Activated B cell treated with CpG ODN at 0.5 μM for 24 hours (primary cell): ENCODE measurements at regions of chrX and their contacts with region 1.

Region 1: DNA sequence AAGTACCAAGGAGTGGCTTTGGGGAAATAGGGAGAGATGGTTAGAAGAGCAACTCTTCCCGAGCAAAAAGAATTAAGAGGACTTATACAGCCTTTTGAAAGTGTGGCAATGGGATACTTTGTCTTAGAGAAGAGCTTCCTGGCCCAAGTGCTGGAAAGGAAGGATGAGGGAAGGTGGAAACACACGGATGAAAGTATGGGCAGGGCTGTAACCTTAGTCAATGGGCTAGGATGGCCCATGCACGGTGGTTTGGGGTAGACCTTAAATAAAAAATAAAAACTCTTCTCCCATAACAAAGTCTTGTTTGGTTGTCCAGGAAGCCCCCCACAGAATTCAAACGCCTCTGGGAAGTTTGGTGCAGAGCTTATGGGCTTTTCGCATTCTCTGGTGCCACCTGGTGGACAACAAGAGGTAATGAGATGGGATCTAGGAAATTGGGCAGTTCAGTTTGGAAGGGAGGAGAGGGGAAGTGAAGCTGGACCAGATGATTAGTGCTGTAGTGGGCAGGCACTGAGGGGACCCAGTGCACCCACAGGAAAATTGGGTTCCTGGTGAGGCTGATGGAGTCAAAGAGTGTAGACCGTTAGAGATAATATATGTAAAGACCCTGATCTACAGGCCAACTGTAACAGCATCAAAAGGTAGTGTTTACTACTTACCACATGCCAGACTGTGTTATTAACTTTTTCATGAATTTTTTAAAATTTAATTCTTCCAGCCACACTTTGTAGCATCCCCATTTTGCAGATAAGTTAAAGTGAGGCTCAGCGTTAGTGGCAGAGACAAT is 13.8 kb upstream of the ENOX2 start:
- DNase-seq: peak; percentile 14
- ATAC-seq: peak; percentile 54
- H3K4me3 Mint-ChIP-seq: no peak overlapping the region
- H3K27ac Mint-ChIP-seq: no peak overlapping the region
- H3K4me1 Mint-ChIP-seq: no peaks in the 10 kb centered on the region
- H3K27me3 Mint-ChIP-seq: no peaks in the 10 kb centered on the region
- CTCF ChIP-seq: no peak

Region 2: DNA sequence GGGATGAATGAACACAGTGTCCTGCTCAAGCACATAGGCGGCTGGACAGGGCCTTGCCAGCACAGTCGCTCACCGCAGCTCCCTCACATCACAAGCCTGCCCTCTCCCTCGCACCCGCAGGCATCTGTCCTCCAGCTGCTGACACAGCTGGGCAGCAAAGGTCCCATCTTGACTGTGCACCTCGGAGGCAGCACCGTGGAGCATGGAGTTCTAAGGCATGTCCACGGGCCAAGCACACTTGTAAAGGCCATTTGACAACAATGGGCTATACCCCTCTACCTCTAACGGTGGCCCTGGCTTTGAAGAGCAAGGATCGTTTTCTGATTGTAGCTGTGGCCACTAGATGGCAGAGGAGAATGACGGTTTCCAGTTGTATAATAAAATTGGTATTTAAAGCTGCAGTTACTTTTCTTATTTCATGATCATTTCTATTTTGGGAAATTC is 1315.8 kb before region 1 on chrX:
- CTCF ChIA-PET with region 1: no interaction called
- POLR2A ChIA-PET with region 1: no interaction called
- intact Hi-C with region 1: loop called (anchors 5 kb)
- DNase-seq: no peak
- ATAC-seq: no peak
- H3K4me3 Mint-ChIP-seq: no peak overlapping the region
- H3K27ac Mint-ChIP-seq: no peak overlapping the region
- H3K4me1 Mint-ChIP-seq: peaks cover 17% of the 10 kb centered on the region
- H3K27me3 Mint-ChIP-seq: no peaks in the 10 kb centered on the region
- CTCF ChIP-seq: no peak

Region 3: GRCh38 chrX:130330706-130331105 is 586.1 kb before region 1 on chrX:
- CTCF ChIA-PET with region 1: interaction called, 16 read pairs
- POLR2A ChIA-PET with region 1: no interaction called
- intact Hi-C with region 1: loop called (anchors 1 kb)
- DNase-seq: peak; percentile 15
- ATAC-seq: peak; percentile 25
- H3K4me3 Mint-ChIP-seq: no peak overlapping the region
- H3K27ac Mint-ChIP-seq: no peak overlapping the region
- H3K4me1 Mint-ChIP-seq: no peaks in the 10 kb centered on the region
- H3K27me3 Mint-ChIP-seq: peaks cover 5% of the 10 kb centered on the region
- CTCF ChIP-seq: no peak

Region 4: DNA sequence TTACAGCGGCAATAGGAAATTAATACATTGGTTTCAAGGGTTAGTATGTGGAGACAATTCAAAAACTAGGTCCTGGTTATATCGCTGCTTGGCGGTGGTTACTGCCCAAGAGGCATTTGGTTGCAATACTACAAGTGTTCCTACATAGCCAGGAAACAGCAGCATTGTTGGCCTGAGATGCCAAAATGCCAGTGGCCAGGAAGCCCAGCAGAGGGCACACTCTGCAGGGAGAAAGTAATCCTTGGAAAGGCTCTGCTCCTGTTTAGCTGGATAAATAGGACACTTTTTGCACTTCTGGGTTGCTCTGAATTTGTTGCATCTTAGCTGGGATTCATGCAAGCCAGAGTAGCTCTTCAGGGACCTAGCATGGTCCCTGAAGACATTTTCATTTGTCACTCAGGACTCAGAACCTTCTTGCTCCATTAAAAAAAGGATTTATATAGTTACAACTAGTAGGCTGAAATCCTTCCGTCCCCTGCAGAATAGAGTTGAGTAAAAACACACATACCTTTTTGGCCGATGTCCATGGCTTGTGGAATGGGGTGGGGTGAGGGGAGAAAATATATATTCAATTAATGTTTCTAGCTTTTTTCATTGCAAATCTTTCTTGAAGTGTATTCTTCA is 523.3 kb before region 1 on chrX:
- CTCF ChIA-PET with region 1: interaction called, 5 read pairs
- POLR2A ChIA-PET with region 1: no interaction called
- intact Hi-C with region 1: loop called (anchors 2 kb)
- DNase-seq: no peak
- ATAC-seq: no peak
- H3K4me3 Mint-ChIP-seq: no peak overlapping the region
- H3K27ac Mint-ChIP-seq: no peak overlapping the region
- H3K4me1 Mint-ChIP-seq: no peaks in the 10 kb centered on the region
- H3K27me3 Mint-ChIP-seq: peaks cover 14% of the 10 kb centered on the region
- CTCF ChIP-seq: no peak

Region 5: GRCh38 chrX:130539721-130540321 is 377.0 kb before region 1 on chrX:
- CTCF ChIA-PET with region 1: interaction called, 40 read pairs
- POLR2A ChIA-PET with region 1: no interaction called
- intact Hi-C with region 1: loop called (anchors 1 kb)
- DNase-seq: no peak
- ATAC-seq: peak; percentile 31
- H3K4me3 Mint-ChIP-seq: no peak overlapping the region
- H3K27ac Mint-ChIP-seq: no peak overlapping the region
- H3K4me1 Mint-ChIP-seq: no peaks in the 10 kb centered on the region
- H3K27me3 Mint-ChIP-seq: no peaks in the 10 kb centered on the region
- CTCF ChIP-seq: no peak

Region 6: DNA sequence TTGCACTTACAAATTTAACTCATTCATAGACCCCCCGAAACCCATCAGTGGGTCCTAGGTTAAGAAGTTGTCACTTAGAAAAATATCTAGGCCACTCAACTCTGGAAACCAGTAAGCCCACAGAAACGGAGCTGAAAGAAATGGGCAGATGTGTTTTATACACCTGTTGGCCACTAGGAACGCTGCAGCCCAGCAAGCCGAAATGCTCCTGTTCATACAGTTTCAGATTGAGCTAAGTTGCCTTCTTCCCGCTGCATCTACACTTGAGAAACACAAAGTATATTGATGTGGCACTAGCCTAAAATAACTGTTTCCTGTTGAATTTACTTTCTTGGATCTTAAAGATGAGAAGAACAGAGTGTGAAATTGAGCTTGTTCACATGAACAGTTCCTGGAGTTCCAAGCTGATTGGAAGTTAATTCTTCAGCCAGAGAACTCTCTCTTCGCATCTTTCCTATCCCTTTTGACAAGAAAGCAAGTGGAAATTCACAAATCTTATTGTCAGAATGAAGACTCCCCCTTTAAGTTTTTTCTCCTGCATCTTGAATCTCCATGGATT is 340.9 kb before region 1 on chrX:
- CTCF ChIA-PET with region 1: interaction called, 14 read pairs
- POLR2A ChIA-PET with region 1: no interaction called
- intact Hi-C with region 1: loop called (anchors 2 kb)
- DNase-seq: no peak
- ATAC-seq: no peak
- H3K4me3 Mint-ChIP-seq: no peak overlapping the region
- H3K27ac Mint-ChIP-seq: no peak overlapping the region
- H3K4me1 Mint-ChIP-seq: no peaks in the 10 kb centered on the region
- H3K27me3 Mint-ChIP-seq: peaks cover 2% of the 10 kb centered on the region
- CTCF ChIP-seq: no peak